PC-9 (cell line): ENCODE measurements at regions of chr3 and their contacts with region 1.

Region 1: DNA sequence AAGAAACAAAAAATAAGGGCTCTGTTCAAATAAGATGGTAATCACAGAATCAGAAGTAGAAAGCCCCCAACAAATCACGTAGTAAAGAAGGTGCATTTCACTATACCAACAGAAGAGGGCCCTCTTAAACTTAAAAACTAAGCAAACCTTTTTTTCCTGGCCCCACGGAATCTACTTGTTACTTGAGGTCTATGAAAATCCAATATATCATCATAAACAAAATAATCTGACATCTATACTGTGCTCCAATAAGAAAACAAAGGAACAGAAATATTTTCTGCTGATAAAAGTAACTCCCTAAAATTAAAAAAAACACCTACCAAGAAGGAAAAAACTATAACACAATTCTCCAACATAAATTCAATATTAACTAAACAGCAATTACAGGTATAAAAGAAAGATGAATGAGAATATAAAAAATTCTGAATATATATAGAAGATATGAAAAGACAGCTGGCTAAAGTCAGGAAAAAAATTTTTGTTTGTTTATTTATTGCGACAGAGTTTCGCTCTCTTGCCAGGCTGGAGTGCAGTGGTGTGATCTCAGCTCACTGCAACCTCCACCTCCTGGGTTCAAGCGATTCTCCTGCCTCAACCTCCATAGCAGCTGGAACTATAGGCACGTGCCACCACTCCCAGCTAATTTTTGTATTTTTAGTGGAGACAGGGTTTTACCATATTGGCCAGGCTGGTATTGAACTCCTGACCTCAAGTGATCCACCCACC is 81.8 kb downstream of the CLASP2 start:
- DNase-seq: peak in 1 of 2 experiments; percentile 2
- H3K4me3 ChIP-seq: no peak overlapping the region
- H3K27ac ChIP-seq: no peak overlapping the region
- H3K4me1 ChIP-seq: no peaks in the 10 kb centered on the region
- H3K27me3 ChIP-seq: no peaks in the 10 kb centered on the region
- CTCF ChIP-seq: peak; percentile 65

Region 2: GRCh38 chr3:33250712-33251111 is 385.6 kb before region 1 on chr3:
- CTCF ChIA-PET with region 1: no interaction called
- POLR2A ChIA-PET with region 1: no interaction called
- intact Hi-C with region 1: no loop called
- DNase-seq: no peak
- H3K4me3 ChIP-seq: no peak overlapping the region
- H3K27ac ChIP-seq: no peak overlapping the region
- H3K4me1 ChIP-seq: no peaks in the 10 kb centered on the region
- H3K27me3 ChIP-seq: no peaks in the 10 kb centered on the region
- CTCF ChIP-seq: no peak

Region 3: GRCh38 chr3:33833408-33834095 is 197.3 kb after region 1 on chr3:
- CTCF ChIA-PET with region 1: no interaction called
- POLR2A ChIA-PET with region 1: interaction called, 15 read pairs
- intact Hi-C with region 1: no loop called
- DNase-seq: no peak
- H3K4me3 ChIP-seq: no peak overlapping the region
- H3K27ac ChIP-seq: no peak overlapping the region
- H3K4me1 ChIP-seq: no peaks in the 10 kb centered on the region
- H3K27me3 ChIP-seq: no peaks in the 10 kb centered on the region
- CTCF ChIP-seq: no peak